ENCODE measurements at regions of chr5 and their contacts with region 1.

Region 1: DNA sequence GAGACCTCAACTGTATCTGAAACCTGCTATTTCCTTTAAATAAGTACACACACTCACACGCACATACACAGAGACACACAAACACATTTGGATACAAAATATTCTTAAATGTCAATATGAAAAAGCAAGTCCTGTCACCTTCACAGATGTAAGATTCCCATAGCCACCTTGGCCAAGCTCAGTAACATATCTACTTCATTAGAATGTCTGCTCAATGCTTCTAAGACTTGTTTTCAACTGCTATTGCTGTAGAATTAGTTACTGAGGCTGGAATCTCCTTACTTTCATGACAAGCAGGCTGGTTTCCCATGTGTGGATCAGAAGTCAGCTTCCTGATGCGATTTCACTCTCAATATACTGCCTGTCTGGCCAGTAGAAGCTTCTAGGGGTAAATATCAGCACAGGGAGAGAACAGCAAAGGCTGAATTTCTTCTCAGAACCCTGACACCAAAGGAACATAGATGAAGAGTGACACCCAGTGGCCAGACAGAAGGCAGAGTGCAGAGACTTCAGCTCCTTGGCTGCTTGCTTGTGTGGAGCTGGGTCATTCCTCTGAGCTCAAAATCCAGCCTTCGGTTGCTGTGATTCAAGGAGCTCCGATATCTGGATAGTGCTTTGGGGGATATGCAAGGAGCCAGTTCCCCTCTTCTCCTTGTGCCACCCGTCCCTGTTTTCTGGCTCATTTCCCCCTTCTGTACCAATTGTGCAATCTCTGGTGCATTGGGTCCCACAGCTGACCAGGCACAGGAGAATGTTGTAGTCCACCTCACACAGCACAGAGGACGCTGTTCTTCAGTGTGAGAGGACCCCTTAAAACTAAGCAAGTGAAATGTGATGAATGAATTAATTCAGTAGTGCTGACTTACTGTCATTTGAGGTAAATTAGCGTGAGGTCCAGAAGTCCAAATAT is 26.6 kb upstream of the ABLIM3 start:
- DNase-seq: peak; percentile 99
- ATAC-seq: peak; percentile 91
- H3K4me3 ChIP-seq: peak overlapping the region; percentile 5; the same call in 1 of the 2 replicates
- H3K27ac ChIP-seq: peak overlapping the region; percentile 53
- H3K4me1 ChIP-seq: peaks cover 55% of the 10 kb centered on the region
- H3K27me3 ChIP-seq: no peaks in the 10 kb centered on the region
- CTCF ChIP-seq: peak; percentile 100

Region 2: GRCh38 chr5:148443998-148444397 is 670.7 kb before region 1 on chr5:
- CTCF ChIA-PET with region 1: no interaction called
- POLR2A ChIA-PET with region 1: no interaction called
- intact Hi-C with region 1: loop called (anchors 2 kb)
- DNase-seq: peak; percentile 91
- ATAC-seq: peak; percentile 93
- H3K4me3 ChIP-seq: no peak overlapping the region
- H3K27ac ChIP-seq: no peak overlapping the region
- H3K4me1 ChIP-seq: no peaks in the 10 kb centered on the region
- H3K27me3 ChIP-seq: no peaks in the 10 kb centered on the region
- CTCF ChIP-seq: peak; percentile 97

Region 3: GRCh38 chr5:148826053-148826738 is 288.5 kb before region 1 on chr5 and contains the start of gene ADRB2:
- CTCF ChIA-PET with region 1: interaction called, 13 read pairs
- POLR2A ChIA-PET with region 1: interaction called, 6 read pairs
- intact Hi-C with region 1: loop called (anchors 1 kb)
- DNase-seq: peak; percentile 100
- ATAC-seq: peak; percentile 83
- H3K4me3 ChIP-seq: peak within 1 kb of the TSS; percentile 73
- H3K27ac ChIP-seq: peak within 1 kb of the TSS; percentile 69
- H3K4me1 ChIP-seq: peaks cover 51% of the 10 kb centered on the region
- H3K27me3 ChIP-seq: no peaks in the 10 kb centered on the region
- CTCF ChIP-seq: no peak
- total RNA-seq, gene ADRB2: 41.1 and 42.1 TPM in 2 replicates

Region 4: GRCh38 chr5:148963664-148964063 is 151.0 kb before region 1 on chr5:
- CTCF ChIA-PET with region 1: interaction called, 10 read pairs
- POLR2A ChIA-PET with region 1: interaction called, 7 read pairs
- intact Hi-C with region 1: loop called (anchors 1 kb)
- DNase-seq: no peak
- ATAC-seq: no peak
- H3K4me3 ChIP-seq: no peak overlapping the region
- H3K27ac ChIP-seq: peak overlapping the region; percentile 79; the same call in 1 of the 2 replicates
- H3K4me1 ChIP-seq: peaks cover 81% of the 10 kb centered on the region
- H3K27me3 ChIP-seq: no peaks in the 10 kb centered on the region
- CTCF ChIP-seq: no peak

Region 5: DNA sequence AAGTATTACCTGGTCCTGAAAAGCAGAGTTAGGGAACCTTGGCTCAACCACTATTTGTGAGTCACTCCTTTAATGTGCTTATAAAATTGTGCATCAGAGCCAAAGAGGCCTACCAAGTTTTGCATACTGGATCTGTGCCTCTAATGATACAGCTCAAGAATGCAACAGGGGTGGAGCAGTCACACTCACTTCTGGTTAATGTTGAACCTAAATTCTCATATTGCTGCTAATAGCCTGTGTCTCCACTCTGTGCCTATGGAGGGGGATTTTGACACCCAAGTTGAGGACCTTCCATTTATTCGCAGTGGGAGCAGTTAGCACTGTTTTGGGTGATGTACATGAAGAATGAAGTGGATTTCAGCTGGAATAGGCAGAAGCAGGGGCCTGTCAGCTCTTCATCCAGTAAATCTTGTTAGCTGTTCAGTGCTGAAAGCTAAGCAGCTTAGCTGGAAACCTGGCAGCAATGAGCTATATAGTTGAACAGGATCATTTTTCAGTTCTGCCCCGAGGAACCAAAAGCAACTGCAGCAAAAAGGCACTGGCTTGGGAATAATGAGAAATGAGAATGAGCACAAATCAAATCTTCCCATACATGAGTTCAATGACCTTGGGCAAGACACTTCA is 61.5 kb before region 1 on chr5:
- CTCF ChIA-PET with region 1: interaction called, 38 read pairs
- POLR2A ChIA-PET with region 1: interaction called, 5 read pairs
- intact Hi-C with region 1: loop called (anchors 1 kb)
- DNase-seq: peak; percentile 99
- ATAC-seq: peak; percentile 93
- H3K4me3 ChIP-seq: peak overlapping the region; percentile 3; the same call in 1 of the 2 replicates
- H3K27ac ChIP-seq: peak overlapping the region; percentile 65
- H3K4me1 ChIP-seq: peaks cover 54% of the 10 kb centered on the region
- H3K27me3 ChIP-seq: no peaks in the 10 kb centered on the region
- CTCF ChIP-seq: peak; percentile 25; the same call in 1 of the 2 replicates

Region 6: GRCh38 chr5:149128023-149128875 is 13.6 kb after region 1 on chr5:
- CTCF ChIA-PET with region 1: interaction called, 36 read pairs
- POLR2A ChIA-PET with region 1: interaction called, 10 read pairs
- intact Hi-C with region 1: no loop called
- DNase-seq: peak; percentile 87
- ATAC-seq: peak; percentile 48
- H3K4me3 ChIP-seq: no peak overlapping the region
- H3K27ac ChIP-seq: peak overlapping the region; percentile 19
- H3K4me1 ChIP-seq: peaks cover 71% of the 10 kb centered on the region
- H3K27me3 ChIP-seq: no peaks in the 10 kb centered on the region
- CTCF ChIP-seq: peak; percentile 100

Region 7: GRCh38 chr5:149205625-149206523 is 91.2 kb after region 1 on chr5:
- CTCF ChIA-PET with region 1: no interaction called
- POLR2A ChIA-PET with region 1: no interaction called
- intact Hi-C with region 1: no loop called
- DNase-seq: peak; percentile 48
- ATAC-seq: peak; percentile 25
- H3K4me3 ChIP-seq: no peak overlapping the region
- H3K27ac ChIP-seq: no peak overlapping the region
- H3K4me1 ChIP-seq: peaks cover 13% of the 10 kb centered on the region
- H3K27me3 ChIP-seq: no peaks in the 10 kb centered on the region
- CTCF ChIP-seq: no peak

Measured in PC-3 (cell line).